Activated CD8-positive, alpha-beta T cell treated with anti-CD3 and anti-CD28 coated beads, Interleukin-2, amount 10 ng/mL, durations not matched to agents 7 days and 5 days (primary cell): ENCODE measurements at regions of chr7 and their contacts with region 1.

Region 1: DNA sequence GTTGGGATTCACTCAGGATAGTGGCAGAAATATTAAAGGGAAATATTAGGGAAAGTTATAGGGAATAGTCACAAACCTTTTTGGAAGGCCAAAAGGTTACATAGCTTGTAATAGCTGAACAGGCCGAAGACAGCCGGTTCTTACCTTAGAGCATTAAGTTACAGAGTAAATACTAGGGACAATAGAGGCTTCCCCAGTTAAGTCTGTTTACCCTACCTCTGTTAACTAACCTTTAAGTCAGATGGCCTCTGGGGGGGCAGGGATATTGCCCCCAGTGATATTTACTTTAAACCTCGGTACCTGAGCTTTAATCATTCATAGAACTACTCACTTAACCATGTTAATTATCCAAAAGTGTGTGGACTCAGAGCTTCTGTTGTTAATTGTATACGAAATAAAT is 7.4 kb downstream of the POLR1F start:
- DNase-seq: no peak
- ATAC-seq: no peak
- H3K4me3 Mint-ChIP-seq: no peak overlapping the region
- H3K27ac Mint-ChIP-seq: no peak overlapping the region
- H3K4me1 Mint-ChIP-seq: peaks cover 8% of the 10 kb centered on the region
- H3K27me3 Mint-ChIP-seq: no peaks in the 10 kb centered on the region

Region 2: GRCh38 chr7:18829858-18830285 is 871.6 kb before region 1 on chr7:
- CTCF ChIA-PET with region 1: no interaction called
- POLR2A ChIA-PET with region 1: no interaction called
- DNase-seq: no peak
- ATAC-seq: no peak
- H3K4me3 Mint-ChIP-seq: no peak overlapping the region
- H3K27ac Mint-ChIP-seq: no peak overlapping the region
- H3K4me1 Mint-ChIP-seq: no peaks in the 10 kb centered on the region
- H3K27me3 Mint-ChIP-seq: no peaks in the 10 kb centered on the region

Region 3: DNA sequence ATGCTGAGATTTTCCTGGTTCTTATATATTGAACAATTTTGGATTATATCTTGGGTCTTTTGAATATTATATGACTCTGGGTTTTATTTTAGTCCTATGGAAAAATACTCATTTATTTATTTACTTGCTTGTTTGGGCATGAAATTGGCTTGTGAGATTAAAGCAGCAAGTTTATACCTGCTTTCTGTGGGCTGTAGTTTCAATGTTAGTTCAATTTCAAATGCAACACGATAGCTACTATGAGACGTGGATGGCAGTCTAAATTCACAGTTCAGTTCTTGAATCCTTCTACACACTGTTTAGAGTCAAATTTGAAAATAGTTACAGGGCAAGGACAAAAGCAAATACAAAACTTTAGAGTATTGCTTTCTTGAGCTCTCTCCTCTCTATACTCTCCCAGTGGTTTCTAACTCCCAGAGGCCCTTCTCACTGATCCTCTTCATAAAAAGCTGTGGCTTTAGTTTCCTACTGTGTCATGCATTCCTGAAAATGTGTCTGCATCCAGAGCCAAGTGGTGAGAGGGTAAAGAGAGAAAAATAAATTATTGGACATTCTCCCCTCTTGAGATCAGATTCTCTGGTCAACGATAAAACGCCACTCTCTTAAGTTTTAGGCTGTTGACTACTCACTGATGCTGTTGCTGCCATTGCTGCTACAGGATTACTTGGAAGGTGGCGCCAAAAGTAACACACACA is 27.1 kb before region 1 on chr7:
- CTCF ChIA-PET with region 1: no interaction called
- POLR2A ChIA-PET with region 1: no interaction called
- DNase-seq: no peak
- ATAC-seq: no peak
- H3K4me3 Mint-ChIP-seq: no peak overlapping the region
- H3K27ac Mint-ChIP-seq: no peak overlapping the region
- H3K4me1 Mint-ChIP-seq: peaks cover 6% of the 10 kb centered on the region
- H3K27me3 Mint-ChIP-seq: no peaks in the 10 kb centered on the region

Region 4: GRCh38 chr7:19713676-19714075 is 12.2 kb after region 1 on chr7:
- CTCF ChIA-PET with region 1: interaction called, 12 read pairs
- POLR2A ChIA-PET with region 1: interaction called, 9 read pairs
- DNase-seq: peak; percentile 55
- ATAC-seq: no peak
- H3K4me3 Mint-ChIP-seq: no peak overlapping the region
- H3K27ac Mint-ChIP-seq: no peak overlapping the region
- H3K4me1 Mint-ChIP-seq: peaks cover 10% of the 10 kb centered on the region
- H3K27me3 Mint-ChIP-seq: peaks cover 11% of the 10 kb centered on the region